ENCODE measurements at regions of chr6 and their contacts with region 1.

Region 1: DNA sequence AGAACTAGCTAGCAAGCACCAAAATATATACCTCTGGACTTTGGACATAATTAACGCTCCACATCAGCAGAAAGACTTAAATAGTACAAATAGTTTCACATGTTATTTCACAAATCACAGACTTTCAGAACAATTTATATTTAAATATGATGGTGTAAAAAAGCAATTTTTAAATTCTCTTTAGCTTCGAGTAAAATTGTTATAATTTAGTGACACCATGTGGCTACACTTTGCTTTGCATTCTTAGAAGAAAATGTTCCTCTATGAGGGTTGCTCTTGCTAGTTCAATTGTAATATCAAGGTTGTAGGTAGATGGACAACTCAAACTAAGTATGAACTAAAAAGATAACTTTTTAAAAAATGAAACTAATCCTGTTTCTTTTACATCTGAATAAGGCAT is 69.0 kb downstream of the BTBD9 start:
- DNase-seq: peak; percentile 40
- ATAC-seq: no peak
- H3K4me3 ChIP-seq: no peak overlapping the region
- H3K27ac ChIP-seq: no peak overlapping the region
- H3K4me1 ChIP-seq: no peaks in the 10 kb centered on the region
- H3K27me3 ChIP-seq: no peaks in the 10 kb centered on the region
- CTCF ChIP-seq: peak; percentile 53
- POLR2A ChIP-seq: no peak
- RAD21 ChIP-seq: peak; percentile 63

Region 2: GRCh38 chr6:38143191-38144150 is 427.3 kb before region 1 on chr6:
- CTCF ChIA-PET with region 1: no interaction called
- POLR2A ChIA-PET with region 1: no interaction called
- dilution Hi-C with region 1: no loop called
- in situ Hi-C with region 1: no loop called
- intact Hi-C with region 1: loop called (anchors 10 kb)
- DNase-seq: no peak
- ATAC-seq: no peak
- H3K4me3 ChIP-seq: no peak overlapping the region
- H3K27ac ChIP-seq: no peak overlapping the region
- H3K4me1 ChIP-seq: peaks cover 7% of the 10 kb centered on the region; the same call in 1 of the 2 replicates
- H3K27me3 ChIP-seq: no peaks in the 10 kb centered on the region
- CTCF ChIP-seq: no peak
- POLR2A ChIP-seq: no peak
- RAD21 ChIP-seq: no peak

Region 3: GRCh38 chr6:38501931-38502330 is 68.8 kb before region 1 on chr6:
- CTCF ChIA-PET with region 1: interaction called, 5 read pairs
- POLR2A ChIA-PET with region 1: no interaction called
- dilution Hi-C with region 1: no loop called
- in situ Hi-C with region 1: no loop called
- intact Hi-C with region 1: loop called (anchors 2 kb)
- DNase-seq: no peak
- ATAC-seq: no peak
- H3K4me3 ChIP-seq: no peak overlapping the region
- H3K27ac ChIP-seq: no peak overlapping the region
- H3K4me1 ChIP-seq: no peaks in the 10 kb centered on the region
- H3K27me3 ChIP-seq: no peaks in the 10 kb centered on the region
- CTCF ChIP-seq: no peak
- POLR2A ChIP-seq: no peak
- RAD21 ChIP-seq: no peak

Region 4: GRCh38 chr6:38671885-38672467 is 101.2 kb after region 1 on chr6:
- CTCF ChIA-PET with region 1: no interaction called
- POLR2A ChIA-PET with region 1: no interaction called
- dilution Hi-C with region 1: no loop called
- in situ Hi-C with region 1: no loop called
- intact Hi-C with region 1: loop called (anchors 5 kb)
- DNase-seq: peak; percentile 76
- ATAC-seq: peak; percentile 91
- H3K4me3 ChIP-seq: no peak overlapping the region
- H3K27ac ChIP-seq: no peak overlapping the region
- H3K4me1 ChIP-seq: no peaks in the 10 kb centered on the region
- H3K27me3 ChIP-seq: no peaks in the 10 kb centered on the region
- CTCF ChIP-seq: peak; percentile 80
- POLR2A ChIP-seq: no peak
- RAD21 ChIP-seq: peak; percentile 78

Measured in IMR-90 (cell line).